ENCODE measurements at regions of chr12 and their contacts with region 1.

Region 1: GRCh38 chr12:42332301-42333285 is 6.6 kb downstream of the PPHLN1 start:
- DNase-seq: peak in 2 of 4 experiments; percentile 42 to 65
- ATAC-seq: peak; percentile 81
- H3K4me3 ChIP-seq: no peak overlapping the region
- H3K27ac ChIP-seq: no peak overlapping the region
- H3K4me1 ChIP-seq: peaks cover 2 to 3% of the 10 kb centered on the region in 2 experiments
- H3K27me3 ChIP-seq: no peaks in the 10 kb centered on the region
- CTCF ChIP-seq: peak; percentile 41 to 72 (median 51); a peak in 5 of 6 replicates
- EP300 ChIP-seq: no peak
- POLR2A ChIP-seq: no peak
- RAD21 ChIP-seq: peak; percentile 78 to 83

Region 2: GRCh38 chr12:42129595-42130204 is 202.9 kb before region 1 on chr12:
- CTCF ChIA-PET with region 1: interaction called, 27 read pairs
- POLR2A ChIA-PET with region 1: no interaction called
- in situ Hi-C with region 1: loop called (anchors 5 kb)
- intact Hi-C with region 1: loop called (anchors 1 kb)
- DNase-seq: peak in 2 of 4 experiments; percentile 26 to 61
- ATAC-seq: peak; percentile 71
- H3K4me3 ChIP-seq: no peak overlapping the region
- H3K27ac ChIP-seq: no peak overlapping the region
- H3K4me1 ChIP-seq: peaks cover 0 to 2% of the 10 kb centered on the region in 2 experiments; a peak in 3 of 5 replicates
- H3K27me3 ChIP-seq: no peaks in the 10 kb centered on the region
- CTCF ChIP-seq: peak; percentile 61 to 79 (median 71); a peak in 5 of 6 replicates
- EP300 ChIP-seq: no peak
- POLR2A ChIP-seq: no peak
- RAD21 ChIP-seq: peak; percentile 89 to 93

Region 3: GRCh38 chr12:42299392-42300308 is 32.9 kb before region 1 on chr12:
- CTCF ChIA-PET with region 1: no interaction called
- POLR2A ChIA-PET with region 1: no interaction called
- in situ Hi-C with region 1: no loop called
- intact Hi-C with region 1: loop called (anchors 5 kb)
- DNase-seq: peak in 1 of 4 experiments; percentile 7
- ATAC-seq: peak; percentile 34; the same call in 2 of the 3 replicates
- H3K4me3 ChIP-seq: no peak overlapping the region
- H3K27ac ChIP-seq: no peak overlapping the region
- H3K4me1 ChIP-seq: peaks cover 0 to 2% of the 10 kb centered on the region in 2 experiments; a peak in 3 of 5 replicates
- H3K27me3 ChIP-seq: no peaks in the 10 kb centered on the region
- CTCF ChIP-seq: no peak
- EP300 ChIP-seq: no peak
- POLR2A ChIP-seq: no peak
- RAD21 ChIP-seq: no peak

Region 4: GRCh38 chr12:42382013-42382680 is 49.6 kb after region 1 on chr12:
- CTCF ChIA-PET with region 1: no interaction called
- POLR2A ChIA-PET with region 1: no interaction called
- in situ Hi-C with region 1: no loop called
- intact Hi-C with region 1: no loop called
- DNase-seq: no peak
- ATAC-seq: no peak
- H3K4me3 ChIP-seq: no peak overlapping the region
- H3K27ac ChIP-seq: no peak overlapping the region
- H3K4me1 ChIP-seq: peaks cover 0 to 17% of the 10 kb centered on the region in 2 experiments; a peak in 2 of 5 replicates
- H3K27me3 ChIP-seq: no peaks in the 10 kb centered on the region
- CTCF ChIP-seq: no peak
- EP300 ChIP-seq: no peak
- POLR2A ChIP-seq: no peak
- RAD21 ChIP-seq: no peak